ENCODE measurements at regions of chr3 and their contacts with region 1.

Region 1: GRCh38 chr3:175898194-175898593 is 1039.1 kb downstream of the NAALADL2 start:
- DNase-seq: no peak
- H3K4me3 ChIP-seq: no peak overlapping the region
- H3K27ac ChIP-seq: no peak overlapping the region
- H3K4me1 ChIP-seq: no peaks in the 10 kb centered on the region
- H3K27me3 ChIP-seq: no peaks in the 10 kb centered on the region
- CTCF ChIP-seq: no peak

Region 2: DNA sequence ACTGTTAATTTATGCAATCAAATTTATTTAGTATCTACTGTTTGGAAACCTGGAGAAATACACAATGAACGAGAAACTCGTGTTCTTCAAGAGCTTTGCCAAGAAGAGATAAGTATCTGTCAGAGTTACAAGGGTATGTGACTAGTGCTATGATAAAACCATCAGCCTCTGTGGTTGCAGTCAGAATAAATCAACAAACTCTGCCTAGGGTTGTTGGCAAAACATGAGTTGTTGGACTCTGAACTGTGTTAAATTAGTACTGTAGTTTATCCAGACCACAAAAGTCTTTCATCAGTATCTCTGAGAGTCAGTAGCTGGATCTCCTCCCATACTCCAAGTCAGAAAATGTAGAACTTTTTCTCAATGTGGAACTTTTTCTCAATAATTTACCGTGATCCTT is 120.7 kb before region 1 on chr3:
- CTCF ChIA-PET with region 1: no interaction called
- POLR2A ChIA-PET with region 1: no interaction called
- intact Hi-C with region 1: no loop called
- DNase-seq: no peak
- H3K4me3 ChIP-seq: no peak overlapping the region
- H3K27ac ChIP-seq: no peak overlapping the region
- H3K4me1 ChIP-seq: no peaks in the 10 kb centered on the region
- H3K27me3 ChIP-seq: no peaks in the 10 kb centered on the region
- CTCF ChIP-seq: no peak

Region 3: DNA sequence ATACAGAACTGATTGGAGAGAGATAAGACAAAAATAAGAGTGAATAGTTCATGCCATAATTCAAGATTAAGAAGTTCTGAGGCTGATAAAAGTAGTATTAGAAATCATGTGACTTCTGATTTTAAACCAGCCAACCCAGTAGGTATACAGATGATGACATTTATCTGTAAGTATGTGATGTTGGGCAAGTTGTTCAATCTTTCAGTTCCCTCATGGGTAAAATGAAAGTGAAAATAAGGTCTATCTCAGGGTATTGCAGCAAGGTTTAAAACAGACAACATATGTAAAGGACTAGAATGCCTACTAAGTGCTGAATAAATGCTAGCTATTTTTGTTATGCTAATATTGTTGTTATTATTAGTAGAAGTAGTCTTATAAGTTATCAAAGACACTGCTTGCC is 16.6 kb after region 1 on chr3:
- CTCF ChIA-PET with region 1: no interaction called
- POLR2A ChIA-PET with region 1: interaction called, 12 read pairs
- intact Hi-C with region 1: no loop called
- DNase-seq: no peak
- H3K4me3 ChIP-seq: no peak overlapping the region
- H3K27ac ChIP-seq: no peak overlapping the region
- H3K4me1 ChIP-seq: no peaks in the 10 kb centered on the region
- H3K27me3 ChIP-seq: no peaks in the 10 kb centered on the region
- CTCF ChIP-seq: no peak

Measured in PC-9 (cell line).